Tibial artery (tissue), 4 donors: ENCODE measurements at regions of chr11 and their contacts with region 1.

Region 1: DNA sequence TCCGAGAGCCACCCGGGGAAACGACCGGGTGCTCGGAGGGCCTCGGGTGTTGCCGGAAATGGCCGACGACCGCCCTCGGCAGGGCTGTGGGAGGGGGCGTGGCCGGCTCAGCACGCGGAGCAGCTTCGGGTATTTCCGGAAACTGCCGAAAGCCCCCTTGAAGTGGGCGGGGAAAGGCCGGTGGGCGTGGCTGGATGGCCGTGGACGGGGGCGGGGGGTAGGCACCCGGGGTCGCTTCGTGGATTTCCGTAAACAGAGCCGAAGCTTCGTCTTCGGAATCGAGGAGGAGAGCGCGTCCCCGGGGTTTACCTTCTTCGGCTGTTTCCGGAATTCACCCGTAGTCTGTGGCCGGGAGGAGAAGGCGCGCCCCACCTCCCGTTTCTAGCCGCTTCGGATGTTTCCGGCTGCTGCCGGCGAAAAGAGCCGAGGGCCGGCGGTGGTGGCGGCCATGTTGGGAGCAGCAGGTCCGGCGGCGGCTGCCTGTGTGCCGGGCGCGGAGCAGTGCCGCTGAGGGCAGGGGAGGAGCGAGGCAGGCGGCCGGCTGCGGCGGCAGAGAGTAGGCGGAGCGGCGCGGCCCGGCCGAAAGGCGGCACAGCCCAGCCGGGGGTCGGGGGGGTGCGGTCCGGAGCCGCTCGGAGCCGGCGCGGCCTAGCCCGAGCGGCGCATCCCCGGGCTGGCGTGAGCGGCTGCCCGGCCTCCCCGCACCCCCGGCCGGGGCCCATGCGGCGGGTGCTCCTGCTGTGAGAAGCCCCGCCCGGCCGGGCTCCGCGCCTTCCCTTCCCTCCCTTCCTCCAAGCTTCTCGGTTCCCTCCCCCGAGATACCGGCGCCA is at the start of gene MARK2:
- DNase-seq: peak; percentile 96 to 98
- H3K4me3 ChIP-seq: peak within 1 kb of the TSS; percentile 77 to 95
- H3K27ac ChIP-seq: peak within 1 kb of the TSS; percentile 77 to 90
- H3K4me1 ChIP-seq: peaks cover 0 to 47% (median 35%) of the 10 kb centered on the region in 4 donors
- H3K27me3 ChIP-seq: no peaks in the 10 kb centered on the region
- CTCF ChIP-seq: no peak

Region 2: DNA sequence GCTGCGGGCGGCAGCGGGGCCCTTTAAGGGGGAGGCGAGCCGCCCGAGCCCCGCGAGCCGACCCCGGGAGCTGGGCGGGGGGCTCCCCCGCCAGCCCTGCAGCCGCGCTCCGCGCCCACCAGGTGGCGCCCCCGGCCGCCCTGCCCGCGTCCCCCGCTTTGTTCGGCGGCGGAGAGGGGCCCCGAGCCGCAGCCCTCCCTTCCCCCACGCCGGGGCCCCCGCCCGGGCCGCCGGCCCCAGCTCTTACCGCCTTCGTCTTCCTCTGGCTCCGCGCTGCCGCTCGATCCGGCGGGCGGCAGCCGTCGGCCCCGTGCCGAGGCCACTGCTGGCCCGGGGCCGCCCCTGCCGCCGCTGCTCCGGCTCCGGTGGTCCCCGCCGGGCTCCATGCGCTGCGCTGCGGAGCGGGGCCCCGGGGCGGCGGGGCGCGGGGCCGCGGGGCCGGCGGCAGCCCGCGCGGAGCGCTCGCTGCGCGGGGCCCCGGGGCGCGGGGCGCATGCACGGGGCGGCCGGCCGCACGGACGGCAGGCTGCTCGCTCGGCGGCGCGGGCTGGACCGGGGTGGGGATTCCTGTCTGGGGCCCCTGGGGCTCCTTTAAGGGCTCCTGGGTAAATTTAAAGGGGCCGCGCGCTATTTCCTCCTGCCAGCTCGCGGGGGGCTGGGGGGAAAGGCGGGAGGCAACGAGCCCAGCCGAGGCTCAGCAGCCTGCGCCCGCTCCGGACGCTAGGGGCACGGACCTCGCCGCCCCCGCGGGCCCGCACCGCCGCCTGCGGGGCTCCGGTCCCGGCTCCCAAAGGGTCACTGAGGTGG is 70.5 kb before region 1 on chr11 and contains the start of gene ZFTA:
- intact Hi-C with region 1: loop called (anchors 2 kb)
- DNase-seq: peak in 1 of 2 donors; percentile 78
- H3K4me3 ChIP-seq: peak within 1 kb of the TSS; percentile 91 to 94
- H3K27ac ChIP-seq: peak within 1 kb of the TSS; percentile 89 to 90
- H3K4me1 ChIP-seq: peaks cover 0 to 42% (median 21%) of the 10 kb centered on the region in 4 donors
- H3K27me3 ChIP-seq: no peaks in the 10 kb centered on the region
- CTCF ChIP-seq: peak; percentile 50 to 86

Region 3: DNA sequence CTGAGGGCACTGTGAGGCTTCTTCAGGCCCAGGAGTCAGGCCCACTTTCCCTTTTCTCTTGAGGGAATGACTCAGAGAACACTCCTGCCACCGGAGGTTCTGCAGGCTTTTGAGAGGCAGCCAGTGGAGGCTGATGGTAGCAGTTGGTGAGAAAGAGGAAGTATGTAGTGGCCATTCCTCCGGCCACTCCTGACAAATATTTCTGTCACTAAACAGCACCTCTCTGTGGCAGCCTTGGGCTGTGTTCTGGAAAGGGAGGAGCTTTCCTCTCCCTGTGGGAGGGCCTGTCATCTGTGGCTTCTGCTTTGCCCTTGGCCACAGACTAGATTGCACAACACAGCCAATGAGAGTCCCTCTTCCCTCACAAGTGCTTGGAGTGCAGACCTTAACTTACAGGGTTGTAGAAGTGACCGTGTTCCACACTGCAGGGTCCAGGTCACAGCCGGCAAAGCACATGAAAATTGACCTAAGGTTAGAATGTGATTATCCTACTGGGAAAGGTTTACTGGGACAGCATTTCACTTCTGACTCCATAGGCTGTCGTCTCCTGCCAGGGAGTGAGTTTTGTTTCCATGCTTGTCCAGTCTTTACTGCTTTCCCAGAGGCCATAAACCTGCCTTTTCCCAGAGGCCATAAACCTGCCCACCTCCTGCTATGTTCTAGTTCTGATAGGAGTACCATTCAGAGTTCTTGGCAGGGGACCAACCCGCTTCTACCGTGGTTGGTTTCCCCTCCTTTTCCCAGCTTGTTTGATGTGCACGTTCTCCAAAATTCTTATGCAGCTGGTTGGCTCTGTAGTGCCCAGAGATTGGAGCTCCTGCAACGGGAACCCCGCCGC is 33.3 kb after region 1 on chr11:
- intact Hi-C with region 1: loop called (anchors 5 kb)
- DNase-seq: peak; percentile 90 to 93
- H3K4me3 ChIP-seq: no peak overlapping the region
- H3K27ac ChIP-seq: peak overlapping the region; percentile 47 to 53
- H3K4me1 ChIP-seq: peaks cover 0 to 74% (median 56%) of the 10 kb centered on the region in 4 donors
- H3K27me3 ChIP-seq: no peaks in the 10 kb centered on the region
- CTCF ChIP-seq: peak; percentile 46 to 47

Region 4: DNA sequence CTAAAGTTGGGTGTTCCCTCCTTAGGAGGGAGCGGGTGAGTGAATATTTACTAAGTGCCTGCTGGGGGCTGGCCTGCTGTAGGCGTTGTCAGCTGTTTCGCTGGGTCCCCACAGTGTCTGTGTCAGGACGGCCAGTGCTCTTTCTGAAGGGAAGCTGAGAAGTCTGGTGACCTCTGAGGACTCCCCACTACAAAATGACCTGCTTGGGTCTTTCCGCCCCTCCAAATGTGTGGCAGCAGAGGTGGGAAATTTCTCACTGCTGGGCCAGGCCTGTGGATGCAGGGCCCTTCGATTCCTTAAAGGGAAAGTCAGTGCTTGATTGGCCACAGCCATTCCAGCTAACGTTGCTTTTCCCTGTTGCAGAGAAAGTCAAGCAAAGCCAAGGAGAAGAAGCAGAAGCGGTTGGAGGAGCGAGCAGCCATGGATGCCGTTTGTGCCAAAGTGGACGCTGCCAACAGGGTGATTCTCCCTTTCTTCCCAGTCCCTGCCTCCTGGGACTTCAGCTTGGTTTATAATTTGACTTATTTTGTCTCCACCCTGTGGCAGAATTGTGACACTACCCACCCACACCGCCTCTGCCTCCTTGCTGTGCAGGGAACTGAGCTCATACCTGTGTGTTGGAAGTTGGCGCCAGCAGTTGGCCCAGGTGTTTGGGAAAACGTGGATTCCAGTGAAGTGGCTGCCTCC is 106.7 kb after region 1 on chr11:
- intact Hi-C with region 1: loop called (anchors 1 kb)
- DNase-seq: peak; percentile 68 to 90
- H3K4me3 ChIP-seq: peak overlapping the region; percentile 3 to 16
- H3K27ac ChIP-seq: peak overlapping the region; percentile 45 to 86
- H3K4me1 ChIP-seq: peaks cover 0 to 19% (median 9%) of the 10 kb centered on the region in 4 donors
- H3K27me3 ChIP-seq: no peaks in the 10 kb centered on the region
- CTCF ChIP-seq: peak; percentile 78 to 95

Region 5: GRCh38 chr11:64152841-64153691 is 314.2 kb after region 1 on chr11:
- intact Hi-C with region 1: loop called (anchors 10 kb)
- DNase-seq: peak; percentile 51 to 72
- H3K4me3 ChIP-seq: no peak overlapping the region
- H3K27ac ChIP-seq: no peak overlapping the region
- H3K4me1 ChIP-seq: peaks cover 0 to 15% (median 8%) of the 10 kb centered on the region in 4 donors
- H3K27me3 ChIP-seq: no peaks in the 10 kb centered on the region
- CTCF ChIP-seq: peak; percentile 95 to 100